Mammary epithelial cell (primary cell): ENCODE measurements at regions of chrX and their contacts with region 1.

Region 1: GRCh38 chrX:23907498-23908218 is at the starts of genes APOO and CXorf58:
- DNase-seq: peak; percentile 90
- H3K4me3 ChIP-seq: peak within 1 kb of the TSS; percentile 56 to 57 (median 56)
- H3K27ac ChIP-seq: peak within 1 kb of the TSS; percentile 61
- H3K4me1 ChIP-seq: no peaks in the 10 kb centered on the region
- H3K27me3 ChIP-seq: no peaks in the 10 kb centered on the region
- CTCF ChIP-seq: peak; percentile 33 to 76
- total RNA-seq, gene APOO: 7.2 to 37.9 TPM
- total RNA-seq, gene CXorf58: 0.17 TPM in 1 of 2 donors, not detected in the other

Region 2: DNA sequence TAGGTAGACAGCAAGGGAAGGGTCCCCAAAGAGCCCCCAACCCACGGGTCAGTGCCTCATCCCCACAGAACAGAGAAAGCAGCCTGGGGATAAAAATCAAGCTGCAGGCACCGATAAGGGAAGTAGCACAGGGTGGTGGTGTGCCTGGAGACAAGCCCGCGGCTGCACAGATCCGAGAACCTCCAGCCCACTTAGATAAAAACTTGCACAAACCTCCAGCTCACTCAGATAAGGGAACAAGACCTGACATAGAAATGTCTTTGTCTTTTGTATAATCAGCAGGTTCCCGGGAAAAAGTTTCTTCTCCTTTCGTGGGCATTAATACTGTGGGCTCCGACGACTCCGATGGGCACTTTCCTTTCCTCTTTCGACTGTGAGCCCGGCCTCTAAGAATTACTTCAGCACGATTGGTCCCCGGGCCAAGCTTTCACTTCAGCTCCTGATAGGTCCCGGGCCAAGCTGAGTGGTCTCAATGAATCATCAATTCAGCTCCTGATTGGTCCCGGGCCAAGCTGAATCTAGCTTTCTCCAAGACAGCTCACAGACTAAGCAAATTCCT is 207.9 kb before region 1 on chrX:
- CTCF ChIA-PET with region 1: no interaction called
- dilution Hi-C with region 1: loop called (anchors 25 kb)
- in situ Hi-C with region 1: loop called (anchors 5 to 10 kb)
- intact Hi-C with region 1: no loop called
- DNase-seq: no peak
- H3K4me3 ChIP-seq: no peak overlapping the region
- H3K27ac ChIP-seq: no peak overlapping the region
- H3K4me1 ChIP-seq: no peaks in the 10 kb centered on the region
- H3K27me3 ChIP-seq: no peaks in the 10 kb centered on the region
- CTCF ChIP-seq: no peak

Region 3: GRCh38 chrX:24024819-24025740 is 117.4 kb after region 1 on chrX:
- CTCF ChIA-PET with region 1: interaction called, 13 read pairs
- dilution Hi-C with region 1: no loop called
- in situ Hi-C with region 1: no loop called
- intact Hi-C with region 1: loop called (anchors 1 kb)
- DNase-seq: peak; percentile 76
- H3K4me3 ChIP-seq: peak overlapping the region; percentile 76 to 87 (median 78)
- H3K27ac ChIP-seq: peak overlapping the region; percentile 75
- H3K4me1 ChIP-seq: no peaks in the 10 kb centered on the region
- H3K27me3 ChIP-seq: no peaks in the 10 kb centered on the region
- CTCF ChIP-seq: no peak

Region 4: GRCh38 chrX:24090300-24091200 is 182.9 kb after region 1 on chrX:
- CTCF ChIA-PET with region 1: no interaction called
- dilution Hi-C with region 1: no loop called
- in situ Hi-C with region 1: no loop called
- intact Hi-C with region 1: no loop called
- DNase-seq: no peak
- H3K4me3 ChIP-seq: no peak overlapping the region
- H3K27ac ChIP-seq: no peak overlapping the region
- H3K4me1 ChIP-seq: no peaks in the 10 kb centered on the region
- H3K27me3 ChIP-seq: no peaks in the 10 kb centered on the region
- CTCF ChIP-seq: no peak

Region 5: DNA sequence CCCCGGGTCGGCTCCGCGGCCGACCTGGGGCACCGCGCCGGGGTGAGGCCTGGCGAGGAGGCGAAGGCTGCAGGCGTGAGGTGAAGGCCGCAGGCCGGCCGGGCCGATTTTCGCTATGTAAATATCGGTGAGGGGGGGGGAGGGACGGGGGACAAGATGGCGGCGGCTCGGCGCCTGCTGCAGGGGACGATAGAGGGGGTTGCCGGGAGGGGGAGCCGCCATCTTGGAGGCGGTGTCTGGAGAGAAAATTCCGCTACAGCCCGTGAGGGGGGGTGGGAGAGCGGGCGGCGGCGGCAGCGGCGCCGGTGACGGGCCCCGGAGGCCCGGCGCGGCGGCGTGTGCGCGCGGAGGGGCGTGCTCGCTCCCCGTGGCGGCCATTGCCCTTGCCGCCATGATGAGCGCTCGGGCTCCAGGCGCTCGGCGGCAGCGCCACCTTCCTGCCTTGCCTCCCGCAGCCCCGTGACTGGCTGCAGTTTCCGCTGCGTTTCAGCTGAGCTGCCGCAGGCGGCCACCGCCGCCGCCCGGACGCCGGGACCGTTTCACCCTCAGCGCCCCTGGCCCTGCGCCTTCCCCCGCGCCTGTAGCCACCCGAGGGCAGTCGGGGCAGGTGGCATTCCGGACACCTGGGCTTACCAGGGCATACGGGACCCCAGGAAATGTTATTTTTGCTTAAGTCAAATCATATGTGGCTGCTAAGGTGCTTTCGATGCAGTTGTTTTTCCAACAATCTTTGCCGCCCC is 242.6 kb after region 1 on chrX:
- CTCF ChIA-PET with region 1: no interaction called
- dilution Hi-C with region 1: no loop called
- in situ Hi-C with region 1: no loop called
- intact Hi-C with region 1: loop called (anchors 5 kb)
- DNase-seq: peak; percentile 86
- H3K4me3 ChIP-seq: peak overlapping the region; percentile 86 to 98 (median 97)
- H3K27ac ChIP-seq: peak overlapping the region; percentile 82
- H3K4me1 ChIP-seq: peaks cover 49% of the 10 kb centered on the region
- H3K27me3 ChIP-seq: no peaks in the 10 kb centered on the region
- CTCF ChIP-seq: peak; percentile 8 to 39

Region 6: GRCh38 chrX:24285082-24285481 is 377.4 kb after region 1 on chrX:
- CTCF ChIA-PET with region 1: no interaction called
- dilution Hi-C with region 1: no loop called
- in situ Hi-C with region 1: no loop called
- intact Hi-C with region 1: loop called (anchors 2 kb)
- DNase-seq: no peak
- H3K4me3 ChIP-seq: no peak overlapping the region
- H3K27ac ChIP-seq: no peak overlapping the region
- H3K4me1 ChIP-seq: no peaks in the 10 kb centered on the region
- H3K27me3 ChIP-seq: peaks cover 7% of the 10 kb centered on the region
- CTCF ChIP-seq: peak in 1 of 2 donors; percentile 3